ENCODE measurements at regions of chr11 and their contacts with region 1.

Region 1: DNA sequence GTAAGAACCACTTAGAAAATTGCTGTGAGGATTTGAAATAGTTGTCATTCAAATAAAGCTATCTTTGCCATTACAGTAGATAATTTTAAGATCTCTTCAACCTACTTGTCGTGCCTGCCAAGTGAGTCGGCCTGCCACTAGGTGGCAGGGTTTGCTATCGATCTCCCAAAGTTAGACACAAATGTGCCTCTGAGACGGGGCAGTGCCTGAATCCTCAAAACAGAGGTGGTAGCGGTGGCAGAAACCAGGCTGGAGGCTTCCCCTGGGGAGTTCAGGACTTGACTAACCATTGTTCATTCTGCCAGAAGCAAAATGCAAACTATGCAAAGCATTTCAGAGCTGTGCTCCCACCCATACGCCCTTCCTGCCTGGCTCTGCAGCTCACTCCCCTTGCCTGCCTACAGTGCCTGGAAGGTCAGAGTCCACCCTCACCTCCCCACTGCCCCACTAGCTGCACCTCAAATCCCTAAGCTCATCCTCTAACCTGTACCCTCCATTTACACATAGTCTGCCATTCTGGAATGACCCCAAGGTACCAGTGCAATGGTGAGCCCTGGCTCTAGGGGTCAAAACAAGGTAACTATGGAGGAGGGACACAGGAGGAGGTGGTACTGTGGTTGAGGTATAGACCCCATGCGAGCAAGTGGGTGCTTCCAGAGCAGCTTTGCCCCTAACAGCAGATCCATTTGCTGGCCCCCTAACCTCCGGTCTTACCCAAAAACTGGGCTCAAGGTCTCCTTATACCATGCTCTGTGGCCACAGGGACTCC is 82.1 kb downstream of the C11orf58 start:
- DNase-seq: peak; percentile 16
- H3K4me3 Mint-ChIP-seq: no peak overlapping the region
- H3K27ac Mint-ChIP-seq: no peak overlapping the region
- H3K4me1 Mint-ChIP-seq: peaks cover 12% of the 10 kb centered on the region
- H3K27me3 Mint-ChIP-seq: peaks cover 3% of the 10 kb centered on the region

Region 2: GRCh38 chr11:16785520-16786128 is 34.9 kb before region 1 on chr11:
- intact Hi-C with region 1: loop called (anchors 1 kb)
- DNase-seq: peak; percentile 31
- H3K4me3 Mint-ChIP-seq: no peak overlapping the region
- H3K27ac Mint-ChIP-seq: no peak overlapping the region
- H3K4me1 Mint-ChIP-seq: no peaks in the 10 kb centered on the region
- H3K27me3 Mint-ChIP-seq: peaks cover 2% of the 10 kb centered on the region

Region 3: GRCh38 chr11:16924826-16925560 is 104.5 kb after region 1 on chr11:
- intact Hi-C with region 1: loop called (anchors 5 kb)
- DNase-seq: no peak
- H3K4me3 Mint-ChIP-seq: peak overlapping the region; percentile 71
- H3K27ac Mint-ChIP-seq: no peak overlapping the region
- H3K4me1 Mint-ChIP-seq: peaks cover 6% of the 10 kb centered on the region
- H3K27me3 Mint-ChIP-seq: peaks cover 56% of the 10 kb centered on the region

Region 4: GRCh38 chr11:16935518-16936302 is 115.2 kb after region 1 on chr11:
- intact Hi-C with region 1: loop called (anchors 1 kb)
- DNase-seq: no peak
- H3K4me3 Mint-ChIP-seq: no peak overlapping the region
- H3K27ac Mint-ChIP-seq: no peak overlapping the region
- H3K4me1 Mint-ChIP-seq: no peaks in the 10 kb centered on the region
- H3K27me3 Mint-ChIP-seq: peaks cover 4% of the 10 kb centered on the region

Region 5: DNA sequence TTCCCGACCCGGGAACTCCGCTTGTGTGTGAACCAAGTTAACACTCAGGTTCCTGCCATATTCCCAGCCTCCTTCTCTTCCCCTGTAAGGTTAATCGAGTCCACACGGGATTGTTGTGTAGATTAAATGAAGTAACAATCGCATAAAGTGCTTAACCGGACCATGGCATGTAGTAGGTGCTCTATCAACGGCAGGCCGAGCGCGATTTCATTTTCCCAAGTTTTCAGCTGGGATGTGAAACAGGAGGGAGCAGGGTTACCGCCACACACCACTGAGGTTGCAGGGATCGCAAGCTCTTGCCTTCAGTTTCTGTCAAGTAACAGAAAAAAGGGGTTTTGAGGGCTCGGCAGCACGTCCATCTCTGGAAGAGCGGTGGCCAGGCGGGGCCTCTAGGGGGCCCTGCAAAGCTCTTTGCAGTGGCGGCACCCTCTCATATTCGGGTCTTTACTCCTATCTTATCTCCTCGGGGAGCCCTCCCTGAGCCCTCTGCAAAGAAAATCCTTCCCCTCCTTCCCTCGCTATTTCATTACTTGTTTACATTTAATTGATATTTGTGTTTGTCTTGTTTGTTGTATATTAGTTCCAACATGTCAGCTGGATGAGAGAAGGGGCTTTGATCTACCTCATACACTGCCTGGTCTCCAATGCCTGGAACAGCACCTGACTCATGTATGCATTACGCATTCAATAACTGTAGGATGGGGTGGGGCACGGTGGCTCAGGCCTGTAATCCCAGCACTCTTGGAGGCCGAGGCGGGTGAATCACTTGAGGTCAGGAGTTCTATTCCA is 194.5 kb after region 1 on chr11:
- intact Hi-C with region 1: loop called (anchors 5 kb)
- DNase-seq: no peak
- H3K4me3 Mint-ChIP-seq: peak overlapping the region; percentile 85
- H3K27ac Mint-ChIP-seq: peak overlapping the region; percentile 34
- H3K4me1 Mint-ChIP-seq: peaks cover 4% of the 10 kb centered on the region
- H3K27me3 Mint-ChIP-seq: peaks cover 36% of the 10 kb centered on the region

Region 6: DNA sequence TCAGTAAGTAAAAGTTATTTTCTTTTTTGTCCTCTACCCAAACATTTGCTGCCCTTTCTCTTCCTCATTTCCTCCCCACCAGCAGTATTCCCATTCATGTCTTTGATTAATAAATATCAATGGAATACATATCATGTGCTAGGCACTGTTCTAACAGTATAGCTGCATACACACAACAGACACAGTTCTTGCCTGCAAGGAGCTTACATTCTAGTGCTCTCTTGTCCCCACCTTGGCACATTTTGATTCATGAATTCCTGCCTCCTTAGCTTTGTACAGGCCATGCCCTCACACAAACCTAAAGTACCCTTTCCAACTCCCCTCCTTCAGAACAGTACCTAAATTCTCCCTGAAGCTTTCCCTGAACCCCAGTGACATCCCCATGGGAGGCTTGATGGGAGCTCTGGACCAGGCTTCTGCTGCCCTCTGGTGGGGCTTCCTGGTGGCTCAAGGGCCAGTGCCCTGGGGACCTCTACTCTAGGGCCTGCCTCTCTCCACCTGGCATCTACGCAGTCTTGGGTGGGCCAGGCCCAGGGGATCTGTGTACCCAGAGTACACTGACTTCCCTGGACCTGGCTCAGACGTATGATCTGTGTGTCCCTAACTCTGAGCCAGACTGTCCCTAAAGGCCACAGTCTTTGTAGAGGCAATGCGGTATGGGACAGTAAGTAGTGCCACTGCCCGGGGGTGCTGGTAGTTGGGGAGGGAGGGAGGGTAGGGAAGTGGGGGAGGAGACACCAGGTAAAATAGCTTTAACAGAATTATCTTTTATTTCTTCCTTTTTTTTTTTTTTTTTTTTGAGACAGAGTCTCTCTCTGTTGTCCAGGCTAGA is 242.9 kb after region 1 on chr11:
- intact Hi-C with region 1: loop called (anchors 1 kb)
- DNase-seq: peak; percentile 27
- H3K4me3 Mint-ChIP-seq: no peak overlapping the region
- H3K27ac Mint-ChIP-seq: no peak overlapping the region
- H3K4me1 Mint-ChIP-seq: no peaks in the 10 kb centered on the region
- H3K27me3 Mint-ChIP-seq: peaks cover 2% of the 10 kb centered on the region

Region 7: GRCh38 chr11:17504330-17505107 is 684.0 kb after region 1 on chr11:
- intact Hi-C with region 1: loop called (anchors 5 kb)
- DNase-seq: peak; percentile 68
- H3K4me3 Mint-ChIP-seq: no peak overlapping the region
- H3K27ac Mint-ChIP-seq: no peak overlapping the region
- H3K4me1 Mint-ChIP-seq: no peaks in the 10 kb centered on the region
- H3K27me3 Mint-ChIP-seq: peaks cover 11% of the 10 kb centered on the region